Activated B cell treated with CpG ODN at 0.5 μM for 24 hours (primary cell): ENCODE measurements at regions of chr3 and their contacts with region 1.

Region 1: GRCh38 chr3:194682694-194683310 is 2.9 kb upstream of the FAM43A start:
- DNase-seq: peak; percentile 43
- ATAC-seq: peak; percentile 62
- H3K4me3 Mint-ChIP-seq: no peak overlapping the region
- H3K27ac Mint-ChIP-seq: peak overlapping the region; percentile 50
- H3K4me1 Mint-ChIP-seq: peaks cover 38% of the 10 kb centered on the region
- H3K27me3 Mint-ChIP-seq: no peaks in the 10 kb centered on the region
- CTCF ChIP-seq: peak; percentile 55

Region 2: GRCh38 chr3:194738254-194739093 is 55.7 kb after region 1 on chr3:
- CTCF ChIA-PET with region 1: interaction called, 18 read pairs
- POLR2A ChIA-PET with region 1: interaction called, 83 read pairs
- intact Hi-C with region 1: no loop called
- DNase-seq: no peak
- ATAC-seq: no peak
- H3K4me3 Mint-ChIP-seq: no peak overlapping the region
- H3K27ac Mint-ChIP-seq: no peak overlapping the region
- H3K4me1 Mint-ChIP-seq: peaks cover 30% of the 10 kb centered on the region
- H3K27me3 Mint-ChIP-seq: no peaks in the 10 kb centered on the region
- CTCF ChIP-seq: no peak

Region 3: DNA sequence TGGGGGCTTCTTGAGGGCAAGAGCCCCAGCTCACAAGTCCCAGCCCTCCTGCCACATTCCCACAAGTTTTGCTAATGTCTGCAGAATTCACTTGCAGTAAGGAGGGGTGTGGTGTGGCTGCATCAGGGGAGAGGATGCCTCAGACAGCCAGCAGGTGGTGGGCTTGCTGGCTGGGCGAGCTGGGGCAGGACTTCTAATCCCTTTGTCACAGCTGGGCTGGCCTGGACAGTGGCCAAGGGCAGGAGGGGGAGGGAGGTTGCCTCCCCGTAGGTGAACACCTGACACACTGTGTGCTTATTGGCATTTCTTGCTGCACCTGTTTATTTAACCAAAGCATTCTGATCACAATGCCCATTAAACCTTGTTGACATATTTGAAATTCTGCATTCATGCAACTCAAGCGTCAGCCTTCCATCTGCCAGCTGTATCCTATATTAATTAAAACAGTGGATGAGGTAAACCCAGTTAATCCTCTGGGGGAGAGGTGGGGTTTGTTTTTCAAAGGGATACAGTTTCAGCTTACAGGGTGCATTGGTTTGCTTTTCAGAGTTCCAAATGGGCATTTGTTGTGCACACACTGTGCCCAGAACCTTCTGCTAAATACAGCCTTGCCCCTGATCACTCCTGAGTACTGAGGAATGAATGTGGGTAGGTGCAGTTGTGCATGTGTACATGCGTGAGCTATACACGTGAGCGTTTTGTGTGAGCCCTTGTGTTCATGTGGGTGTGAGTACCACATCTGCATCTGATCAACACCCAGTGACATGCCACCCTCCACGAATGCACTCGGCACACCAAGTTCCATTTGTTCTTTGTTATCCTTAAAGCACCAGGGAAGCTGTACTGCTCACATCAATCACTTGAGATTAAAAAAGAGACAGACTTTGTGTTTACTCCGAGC is 319.4 kb after region 1 on chr3:
- CTCF ChIA-PET with region 1: interaction called, 19 read pairs
- POLR2A ChIA-PET with region 1: interaction called, 4 read pairs
- intact Hi-C with region 1: loop called (anchors 1 kb)
- DNase-seq: no peak
- ATAC-seq: peak; percentile 79
- H3K4me3 Mint-ChIP-seq: no peak overlapping the region
- H3K27ac Mint-ChIP-seq: no peak overlapping the region
- H3K4me1 Mint-ChIP-seq: peaks cover 31% of the 10 kb centered on the region
- H3K27me3 Mint-ChIP-seq: no peaks in the 10 kb centered on the region
- CTCF ChIP-seq: no peak

Region 4: DNA sequence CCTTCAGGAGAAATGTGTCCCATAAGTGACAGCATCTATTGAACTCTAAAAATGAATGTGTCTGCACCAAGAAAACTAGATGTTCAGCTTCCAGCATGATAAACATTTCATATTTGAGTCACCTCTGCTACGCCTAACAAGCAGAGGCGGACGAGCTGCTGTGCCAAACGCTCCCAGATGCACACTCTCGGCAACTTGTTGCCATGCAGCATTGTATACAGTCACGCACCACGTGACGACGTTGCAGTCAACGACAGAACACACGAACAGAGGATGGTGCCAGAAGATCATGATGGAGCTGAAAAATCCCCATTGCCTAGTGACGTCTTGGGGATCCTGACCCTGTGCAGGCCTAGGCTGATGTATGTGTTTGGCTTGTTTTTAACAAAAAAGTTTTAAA is 450.7 kb after region 1 on chr3:
- CTCF ChIA-PET with region 1: interaction called, 14 read pairs
- POLR2A ChIA-PET with region 1: interaction called, 41 read pairs
- intact Hi-C with region 1: loop called (anchors 1 kb)
- DNase-seq: no peak
- ATAC-seq: peak; percentile 8
- H3K4me3 Mint-ChIP-seq: no peak overlapping the region
- H3K27ac Mint-ChIP-seq: no peak overlapping the region
- H3K4me1 Mint-ChIP-seq: peaks cover 39% of the 10 kb centered on the region
- H3K27me3 Mint-ChIP-seq: no peaks in the 10 kb centered on the region
- CTCF ChIP-seq: no peak

Region 5: DNA sequence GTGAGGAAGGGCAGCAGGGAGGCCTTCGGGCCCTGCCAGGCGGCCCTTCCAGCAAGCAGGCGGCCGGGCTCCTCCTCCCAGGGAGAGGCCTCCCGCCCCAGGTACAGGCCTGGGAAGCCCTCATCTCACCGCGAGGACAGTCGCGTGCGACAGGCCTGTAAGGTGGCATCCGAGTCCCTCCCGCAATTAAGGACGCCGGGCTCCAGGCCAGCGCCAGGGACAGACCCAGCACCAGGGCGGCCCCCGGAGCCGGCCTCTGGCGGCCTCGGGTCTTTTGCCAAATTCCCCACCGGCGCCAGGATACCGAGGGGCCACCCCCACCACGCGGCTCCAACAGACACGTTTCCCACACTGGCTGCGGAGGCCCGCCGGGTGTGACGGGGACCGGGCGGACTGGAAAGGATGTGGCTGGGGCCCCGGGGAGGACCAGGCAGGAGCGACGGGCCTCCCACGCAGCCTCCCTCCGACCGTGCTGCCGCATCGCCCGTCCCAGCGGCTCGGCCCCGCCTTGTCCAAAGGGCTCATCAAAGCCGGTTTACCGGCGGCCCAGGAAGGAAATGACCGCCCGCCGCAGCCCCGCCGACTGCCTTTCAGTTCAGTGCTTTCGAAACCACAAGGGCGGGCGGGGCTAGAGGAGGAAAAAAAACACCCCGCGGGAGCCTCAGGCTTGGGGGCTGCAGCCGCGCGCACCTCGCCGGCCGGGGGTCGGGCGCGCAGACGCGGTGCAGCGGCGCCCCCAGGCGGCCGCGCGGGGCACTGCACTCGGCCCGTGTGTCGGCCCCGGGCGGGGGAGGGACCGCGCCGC is 576.9 kb after region 1 on chr3:
- CTCF ChIA-PET with region 1: interaction called, 48 read pairs
- POLR2A ChIA-PET with region 1: interaction called, 38 read pairs
- intact Hi-C with region 1: loop called (anchors 1 kb)
- DNase-seq: peak; percentile 95
- ATAC-seq: peak; percentile 91
- H3K4me3 Mint-ChIP-seq: peak overlapping the region; percentile 74
- H3K27ac Mint-ChIP-seq: peak overlapping the region; percentile 81
- H3K4me1 Mint-ChIP-seq: peaks cover 13% of the 10 kb centered on the region
- H3K27me3 Mint-ChIP-seq: no peaks in the 10 kb centered on the region
- CTCF ChIP-seq: no peak

Region 6: GRCh38 chr3:195542698-195543499 is 860.1 kb after region 1 on chr3 and contains the start of gene PPP1R2:
- CTCF ChIA-PET with region 1: interaction called, 5 read pairs
- POLR2A ChIA-PET with region 1: interaction called, 25 read pairs
- intact Hi-C with region 1: loop called (anchors 1 kb)
- DNase-seq: peak; percentile 95
- ATAC-seq: peak; percentile 84
- H3K4me3 Mint-ChIP-seq: peak within 1 kb of the TSS; percentile 91
- H3K27ac Mint-ChIP-seq: peak within 1 kb of the TSS; percentile 92
- H3K4me1 Mint-ChIP-seq: peaks cover 76% of the 10 kb centered on the region
- H3K27me3 Mint-ChIP-seq: no peaks in the 10 kb centered on the region
- CTCF ChIP-seq: no peak
- total RNA-seq, gene PPP1R2: 62.5 and 64.1 TPM in 2 replicates